Activated CD4-positive, alpha-beta T cell treated with anti-CD3 and anti-CD28 coated beads, Interleukin-2, amount 10 ng/mL, durations not matched to agents 7 days and 5 days (primary cell): ENCODE measurements at regions of chr10 and their contacts with region 1.

Region 1: DNA sequence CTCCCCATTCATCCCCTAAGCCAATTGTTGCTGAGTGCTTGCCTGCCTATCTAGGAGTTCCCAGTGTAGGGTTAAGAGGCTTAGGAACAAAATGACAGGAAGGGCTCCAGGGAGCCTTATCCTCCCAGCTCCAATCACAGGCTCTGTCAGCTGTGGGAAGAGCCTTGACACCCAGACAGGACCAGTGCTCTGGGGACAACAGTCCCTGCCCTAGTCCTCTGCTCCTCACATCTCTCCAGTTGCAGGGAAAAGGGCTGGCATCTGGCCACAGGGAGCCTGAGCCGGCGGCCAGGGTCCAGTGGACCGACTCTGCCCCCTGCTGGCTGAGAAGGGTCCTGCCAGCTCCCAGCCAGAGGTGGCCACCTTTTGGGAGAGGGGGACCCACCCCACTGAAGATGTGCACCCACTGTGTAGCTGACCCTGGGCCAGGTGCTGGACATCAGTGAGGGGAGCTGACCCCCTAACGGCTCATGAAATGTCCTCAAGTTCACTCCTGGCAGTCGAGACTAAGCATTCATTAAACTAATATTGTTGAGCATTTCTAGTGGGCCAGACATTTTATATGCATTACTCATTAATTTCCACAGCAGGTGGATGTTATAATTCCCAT is 17.6 kb downstream of the DNAJB12 start:
- DNase-seq: peak; percentile 60
- H3K4me3 Mint-ChIP-seq: no peak overlapping the region
- H3K27ac Mint-ChIP-seq: peak overlapping the region; percentile 47
- H3K4me1 Mint-ChIP-seq: peaks cover 71% of the 10 kb centered on the region
- H3K27me3 Mint-ChIP-seq: no peaks in the 10 kb centered on the region

Region 2: GRCh38 chr10:72048450-72049124 is 288.5 kb before region 1 on chr10:
- CTCF ChIA-PET with region 1: interaction called, 10 read pairs
- POLR2A ChIA-PET with region 1: no interaction called
- DNase-seq: peak; percentile 94
- H3K4me3 Mint-ChIP-seq: no peak overlapping the region
- H3K27ac Mint-ChIP-seq: no peak overlapping the region
- H3K4me1 Mint-ChIP-seq: peaks cover 12% of the 10 kb centered on the region
- H3K27me3 Mint-ChIP-seq: no peaks in the 10 kb centered on the region

Region 3: GRCh38 chr10:72126184-72126871 is 210.8 kb before region 1 on chr10:
- CTCF ChIA-PET with region 1: interaction called, 20 read pairs
- POLR2A ChIA-PET with region 1: no interaction called
- DNase-seq: no peak
- H3K4me3 Mint-ChIP-seq: no peak overlapping the region
- H3K27ac Mint-ChIP-seq: no peak overlapping the region
- H3K4me1 Mint-ChIP-seq: peaks cover 43% of the 10 kb centered on the region
- H3K27me3 Mint-ChIP-seq: no peaks in the 10 kb centered on the region

Region 4: DNA sequence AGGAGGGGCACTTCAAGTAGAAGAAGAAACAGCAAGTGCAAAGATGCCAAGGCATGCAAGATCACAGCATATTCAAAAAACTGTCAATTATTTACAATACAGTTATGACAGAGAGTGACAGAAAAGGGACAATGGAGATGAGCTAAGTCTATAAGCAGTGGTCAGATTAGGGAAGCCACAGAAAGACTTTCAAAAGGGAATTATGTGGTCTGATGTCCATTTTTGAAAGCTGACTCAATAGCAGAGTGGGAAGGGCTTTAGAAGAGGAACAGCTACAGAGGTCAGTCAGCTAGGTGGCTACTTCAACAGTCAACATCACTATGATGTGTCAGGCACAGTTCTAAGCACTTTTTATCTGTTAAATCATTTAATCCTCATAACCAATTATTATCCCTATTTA is 203.6 kb before region 1 on chr10:
- CTCF ChIA-PET with region 1: interaction called, 20 read pairs
- POLR2A ChIA-PET with region 1: no interaction called
- DNase-seq: no peak
- H3K4me3 Mint-ChIP-seq: no peak overlapping the region
- H3K27ac Mint-ChIP-seq: no peak overlapping the region
- H3K4me1 Mint-ChIP-seq: peaks cover 40% of the 10 kb centered on the region
- H3K27me3 Mint-ChIP-seq: no peaks in the 10 kb centered on the region

Region 5: GRCh38 chr10:72297968-72298773 is 39.0 kb before region 1 on chr10:
- CTCF ChIA-PET with region 1: interaction called, 25 read pairs
- POLR2A ChIA-PET with region 1: interaction called, 10 read pairs
- DNase-seq: peak; percentile 95
- H3K4me3 Mint-ChIP-seq: peak overlapping the region; percentile 82
- H3K27ac Mint-ChIP-seq: peak overlapping the region; percentile 97
- H3K4me1 Mint-ChIP-seq: peaks cover 70% of the 10 kb centered on the region
- H3K27me3 Mint-ChIP-seq: no peaks in the 10 kb centered on the region

Region 6: DNA sequence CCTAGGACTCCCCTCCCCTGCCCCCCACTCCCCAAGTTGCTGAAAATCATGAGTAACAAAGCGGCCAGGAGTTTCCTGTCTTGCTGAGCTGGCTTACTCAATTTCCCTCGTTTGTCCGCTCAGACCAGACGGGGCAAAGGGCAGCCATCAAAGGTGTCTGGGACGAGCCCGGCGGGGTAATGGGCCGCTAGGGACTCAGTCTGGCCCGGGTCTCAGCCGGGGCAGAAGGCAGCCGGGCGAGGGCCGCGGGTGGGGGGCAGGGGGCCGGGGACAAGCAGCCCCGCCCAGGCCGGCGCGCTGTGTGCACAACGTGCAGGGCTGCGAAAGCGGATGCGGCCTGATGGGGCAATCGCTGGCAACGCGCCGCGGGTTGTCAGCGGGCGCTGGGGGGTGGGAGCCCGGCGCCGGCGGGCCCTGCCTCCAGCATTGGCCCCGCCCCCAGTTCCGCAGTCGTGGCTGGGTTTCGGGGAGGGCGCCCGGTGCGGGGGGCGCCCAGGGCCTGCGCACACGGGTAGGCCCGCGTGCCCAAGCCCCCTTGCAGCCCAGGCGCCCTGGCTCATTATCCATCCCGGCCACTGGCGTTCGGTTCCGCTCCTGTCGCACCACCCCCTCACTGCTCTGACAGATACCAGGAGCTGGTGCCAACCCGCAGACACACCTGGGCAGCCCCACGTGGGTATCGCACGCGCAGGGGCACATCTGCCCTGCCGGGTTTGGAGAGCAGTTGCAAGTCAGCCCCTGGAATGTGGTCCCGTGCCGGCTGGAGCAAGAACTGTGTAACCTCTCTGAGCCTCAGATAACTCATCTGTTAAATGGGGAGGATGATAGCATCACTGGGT is 17.5 kb before region 1 on chr10:
- CTCF ChIA-PET with region 1: interaction called, 31 read pairs
- POLR2A ChIA-PET with region 1: no interaction called
- DNase-seq: peak; percentile 89
- H3K4me3 Mint-ChIP-seq: peak overlapping the region; percentile 69
- H3K27ac Mint-ChIP-seq: peak overlapping the region; percentile 95
- H3K4me1 Mint-ChIP-seq: peaks cover 83% of the 10 kb centered on the region
- H3K27me3 Mint-ChIP-seq: no peaks in the 10 kb centered on the region

Region 7: DNA sequence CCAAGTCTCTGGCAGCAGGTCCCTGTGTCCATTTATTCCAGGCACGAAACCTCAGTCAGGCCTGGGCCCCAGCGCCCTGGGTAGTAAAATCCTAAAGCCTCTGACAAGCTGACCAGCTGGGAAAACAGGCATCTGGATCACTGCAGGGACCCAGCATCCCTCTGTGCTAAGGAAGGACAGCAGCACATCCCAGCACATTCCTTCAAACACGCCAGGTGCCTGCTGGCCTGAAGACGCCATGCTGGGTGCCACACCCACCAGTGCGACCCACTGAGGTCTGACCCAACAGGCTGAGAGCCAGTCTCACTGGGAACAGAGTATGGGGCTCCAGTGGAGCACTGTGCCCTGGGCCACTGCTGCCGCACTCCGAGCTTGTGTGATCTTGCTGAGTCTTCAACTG is 11.2 kb after region 1 on chr10:
- CTCF ChIA-PET with region 1: interaction called, 21 read pairs
- POLR2A ChIA-PET with region 1: no interaction called
- DNase-seq: no peak
- H3K4me3 Mint-ChIP-seq: no peak overlapping the region
- H3K27ac Mint-ChIP-seq: no peak overlapping the region
- H3K4me1 Mint-ChIP-seq: peaks cover 39% of the 10 kb centered on the region
- H3K27me3 Mint-ChIP-seq: no peaks in the 10 kb centered on the region

Region 8: DNA sequence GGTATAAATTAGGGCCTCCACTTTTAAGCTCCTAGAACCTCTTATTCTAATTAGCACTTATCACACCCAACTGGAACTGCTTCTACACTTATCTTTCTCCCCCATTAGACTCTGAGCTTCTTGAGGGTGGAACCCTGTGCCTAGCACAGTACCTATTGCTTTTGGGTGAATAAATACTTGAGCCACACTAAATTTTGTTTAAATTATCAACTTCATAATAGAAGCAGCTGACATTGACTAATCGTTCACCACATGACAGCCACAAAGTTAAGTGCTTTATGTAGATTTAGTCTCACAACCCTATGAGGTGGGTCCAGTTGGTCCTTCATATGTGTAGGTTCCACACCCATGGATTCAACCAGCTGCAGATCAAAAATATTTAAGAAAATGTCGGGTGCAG is 53.6 kb after region 1 on chr10:
- CTCF ChIA-PET with region 1: no interaction called
- POLR2A ChIA-PET with region 1: no interaction called
- DNase-seq: no peak
- H3K4me3 Mint-ChIP-seq: no peak overlapping the region
- H3K27ac Mint-ChIP-seq: no peak overlapping the region
- H3K4me1 Mint-ChIP-seq: no peaks in the 10 kb centered on the region
- H3K27me3 Mint-ChIP-seq: no peaks in the 10 kb centered on the region